ENCODE measurements at regions of chr7 and their contacts with region 1.

Region 1: DNA sequence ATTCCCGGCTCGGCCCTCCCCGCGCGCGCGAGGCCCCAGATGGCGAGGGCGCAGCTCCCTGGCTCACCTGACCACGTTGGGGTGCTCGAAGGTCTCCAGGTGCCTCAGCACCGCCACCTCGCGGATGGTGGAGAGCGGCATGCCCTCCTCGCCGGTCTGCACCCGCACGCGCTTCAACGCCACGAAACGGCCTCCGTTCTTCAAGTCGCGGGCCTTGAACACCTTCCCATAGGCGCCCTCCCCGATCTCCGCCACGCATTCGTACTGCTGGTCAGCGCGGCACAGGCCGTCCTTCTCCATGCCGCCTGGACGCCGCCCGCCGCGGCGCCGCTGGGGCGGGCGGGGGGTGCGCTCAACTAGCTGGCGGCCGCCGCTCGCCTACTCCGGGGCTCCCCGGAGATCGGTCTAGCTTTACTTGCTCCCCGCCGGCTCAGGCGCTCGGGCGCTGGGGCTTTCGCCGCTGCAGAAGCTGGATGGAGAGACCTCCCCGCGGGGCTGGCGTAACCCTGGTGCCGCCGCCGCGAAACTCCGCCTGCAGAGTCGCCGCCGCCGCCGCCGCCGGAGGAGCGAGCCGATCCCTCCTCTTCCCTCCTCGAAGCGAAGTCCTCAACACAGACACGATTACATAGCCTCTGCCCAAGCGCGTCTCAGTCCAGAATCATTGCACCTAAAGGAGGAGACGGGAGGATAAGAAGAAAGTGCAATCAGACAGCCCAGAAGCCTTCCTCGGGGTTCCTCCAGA is 3.2 kb downstream of the CDK6 start:
- DNase-seq: peak; percentile 73 to 88 (median 84)
- ATAC-seq: peak; percentile 86
- H3K4me3 ChIP-seq: peak overlapping the region; percentile 77
- H3K4me3 Mint-ChIP-seq: peak overlapping the region; percentile 91 to 99 (median 96)
- H3K27ac ChIP-seq: peak overlapping the region; percentile 73
- H3K27ac Mint-ChIP-seq: peak overlapping the region; percentile 78 to 99 (median 90)
- H3K4me1 ChIP-seq: peaks cover 27 to 29% of the 10 kb centered on the region in 2 donors
- H3K4me1 Mint-ChIP-seq: peaks cover 12 to 60% (median 51%) of the 10 kb centered on the region in 7 donors
- H3K27me3 ChIP-seq: no peaks in the 10 kb centered on the region
- H3K27me3 Mint-ChIP-seq: peaks cover 0 to 13% (median 0%) of the 10 kb centered on the region in 5 donors

Region 2: GRCh38 chr7:92134271-92135051 is 698.7 kb before region 1 on chr7 and contains the start of gene CYP51A1:
- CTCF ChIA-PET with region 1: no interaction called
- POLR2A ChIA-PET with region 1: no interaction called
- intact Hi-C with region 1: loop called (anchors 2 to 10 kb)
- DNase-seq: peak; percentile 93 to 98 (median 96)
- ATAC-seq: peak; percentile 93
- H3K4me3 ChIP-seq: peak within 1 kb of the TSS; percentile 92
- H3K4me3 Mint-ChIP-seq: peak within 1 kb of the TSS; percentile 95 to 100 (median 98)
- H3K27ac ChIP-seq: peak within 1 kb of the TSS; percentile 94
- H3K27ac Mint-ChIP-seq: peak within 1 kb of the TSS; percentile 89 to 100 (median 99)
- H3K4me1 ChIP-seq: peaks cover 4 to 12% of the 10 kb centered on the region in 2 donors
- H3K4me1 Mint-ChIP-seq: peaks cover 12 to 49% (median 40%) of the 10 kb centered on the region in 7 donors
- H3K27me3 ChIP-seq: no peaks in the 10 kb centered on the region
- H3K27me3 Mint-ChIP-seq: peaks cover 0 to 2% (median 0%) of the 10 kb centered on the region in 5 donors
- total RNA-seq, gene CYP51A1: 14.7 to 36.6 (median 21.7) TPM

Region 3: GRCh38 chr7:92590711-92591310 is 242.4 kb before region 1 on chr7:
- CTCF ChIA-PET with region 1: interaction called, 3 read pairs
- POLR2A ChIA-PET with region 1: interaction called, 4 read pairs
- intact Hi-C with region 1: loop called (anchors 1 kb)
- DNase-seq: peak in 1 of 9 donors; percentile 11
- ATAC-seq: no peak
- H3K4me3 ChIP-seq: peak overlapping the region; percentile 77
- H3K4me3 Mint-ChIP-seq: peak overlapping the region; percentile 90 to 96 (median 94)
- H3K27ac ChIP-seq: peak overlapping the region; percentile 94
- H3K27ac Mint-ChIP-seq: peak overlapping the region in 8 of 9 donors; percentile 22 to 96 (median 76)
- H3K4me1 ChIP-seq: peaks cover 14 to 21% of the 10 kb centered on the region in 2 donors
- H3K4me1 Mint-ChIP-seq: peaks cover 27 to 46% (median 39%) of the 10 kb centered on the region in 7 donors
- H3K27me3 ChIP-seq: no peaks in the 10 kb centered on the region
- H3K27me3 Mint-ChIP-seq: peaks cover 0 to 4% (median 0%) of the 10 kb centered on the region in 5 donors

Region 4: GRCh38 chr7:92717993-92718716 is 115.0 kb before region 1 on chr7:
- CTCF ChIA-PET with region 1: interaction called, 3 read pairs
- POLR2A ChIA-PET with region 1: interaction called, 5 read pairs
- intact Hi-C with region 1: loop called (anchors 1 kb)
- DNase-seq: peak in 8 of 9 donors; percentile 45 to 73 (median 62)
- ATAC-seq: peak; percentile 91
- H3K4me3 ChIP-seq: peak overlapping the region; percentile 62
- H3K4me3 Mint-ChIP-seq: peak overlapping the region; percentile 84 to 96 (median 94)
- H3K27ac ChIP-seq: peak overlapping the region; percentile 49
- H3K27ac Mint-ChIP-seq: peak overlapping the region; percentile 88 to 99 (median 96)
- H3K4me1 ChIP-seq: peaks cover 10 to 14% of the 10 kb centered on the region in 2 donors
- H3K4me1 Mint-ChIP-seq: peaks cover 26 to 73% (median 40%) of the 10 kb centered on the region in 7 donors
- H3K27me3 ChIP-seq: no peaks in the 10 kb centered on the region
- H3K27me3 Mint-ChIP-seq: no peaks in the 10 kb centered on the region

Region 5: DNA sequence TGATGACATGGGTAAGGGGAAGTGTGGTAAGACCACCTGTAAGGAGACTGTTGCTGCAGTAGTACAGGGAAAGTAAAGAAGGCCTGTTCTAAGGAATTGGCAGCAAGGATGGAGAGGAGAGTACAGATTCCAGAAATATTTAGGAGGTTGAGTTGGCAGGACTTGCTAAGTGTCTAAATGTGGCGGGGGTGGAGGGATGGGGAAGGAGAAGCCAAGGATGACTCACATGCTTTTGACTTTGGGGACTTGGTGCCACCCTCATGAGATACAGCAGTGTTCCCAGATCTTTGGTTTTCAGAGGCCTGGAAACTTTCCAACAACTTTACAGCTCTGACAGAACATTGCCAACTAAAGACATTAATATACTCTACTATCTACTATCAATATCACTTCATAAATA is 42.2 kb before region 1 on chr7:
- CTCF ChIA-PET with region 1: no interaction called
- POLR2A ChIA-PET with region 1: no interaction called
- intact Hi-C with region 1: no loop called
- DNase-seq: no peak
- ATAC-seq: no peak
- H3K4me3 ChIP-seq: no peak overlapping the region
- H3K4me3 Mint-ChIP-seq: no peak overlapping the region
- H3K27ac ChIP-seq: no peak overlapping the region
- H3K27ac Mint-ChIP-seq: peak overlapping the region in 2 of 9 donors; percentile 22 to 68
- H3K4me1 ChIP-seq: peaks cover 0 to 3% of the 10 kb centered on the region in 2 donors
- H3K4me1 Mint-ChIP-seq: peaks cover 0 to 56% (median 34%) of the 10 kb centered on the region in 7 donors
- H3K27me3 ChIP-seq: no peaks in the 10 kb centered on the region
- H3K27me3 Mint-ChIP-seq: no peaks in the 10 kb centered on the region

Region 6: GRCh38 chr7:92854501-92855238 is 21.5 kb after region 1 on chr7:
- CTCF ChIA-PET with region 1: no interaction called
- POLR2A ChIA-PET with region 1: no interaction called
- intact Hi-C with region 1: loop called in 1 of 2 experiments (anchors 2 kb)
- DNase-seq: no peak
- ATAC-seq: no peak
- H3K4me3 ChIP-seq: no peak overlapping the region
- H3K4me3 Mint-ChIP-seq: peak overlapping the region in 1 of 10 donors; percentile 18
- H3K27ac ChIP-seq: no peak overlapping the region
- H3K27ac Mint-ChIP-seq: peak overlapping the region in 1 of 9 donors; percentile 55
- H3K4me1 ChIP-seq: no peaks in the 10 kb centered on the region
- H3K4me1 Mint-ChIP-seq: peaks cover 0 to 10% (median 0%) of the 10 kb centered on the region in 7 donors
- H3K27me3 ChIP-seq: peaks cover 0 to 4% of the 10 kb centered on the region in 2 donors
- H3K27me3 Mint-ChIP-seq: peaks cover 0 to 17% (median 4%) of the 10 kb centered on the region in 5 donors

Region 7: DNA sequence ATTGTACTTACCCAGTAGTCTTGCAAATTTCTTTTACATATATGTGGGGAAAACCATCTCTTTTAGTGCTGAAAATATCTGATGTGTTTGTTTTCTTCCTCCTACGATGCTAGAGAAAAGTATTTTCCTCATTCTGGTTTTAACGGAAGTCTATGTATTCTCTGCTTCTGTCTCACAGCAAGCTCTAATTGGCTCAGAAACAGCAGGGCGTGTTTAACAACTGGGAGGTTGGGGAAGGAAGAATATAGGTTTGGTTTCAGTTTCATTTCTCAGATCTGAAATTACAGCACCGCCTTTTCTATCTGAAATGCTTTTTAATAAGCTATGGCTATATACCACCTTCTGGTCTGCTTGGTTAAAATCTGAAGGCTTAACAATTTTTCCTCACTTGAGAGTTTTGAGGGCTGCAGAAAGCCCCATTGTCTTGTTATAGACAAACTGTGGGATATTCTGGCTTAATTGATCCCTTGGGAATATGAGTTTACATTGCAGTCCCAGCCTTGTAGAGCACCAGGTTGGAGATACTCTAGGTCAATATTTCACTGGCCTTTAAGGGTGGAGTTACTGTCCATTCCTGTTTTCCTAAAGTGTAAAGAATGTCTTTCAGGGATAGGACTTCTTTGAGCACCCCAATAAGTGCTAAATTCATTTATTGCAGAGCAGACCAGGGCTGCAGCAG is 284.8 kb after region 1 on chr7 and contains the start of gene SAMD9:
- CTCF ChIA-PET with region 1: interaction called, 3 read pairs
- POLR2A ChIA-PET with region 1: interaction called, 3 read pairs
- intact Hi-C with region 1: loop called (anchors 1 to 2 kb)
- DNase-seq: peak in 8 of 9 donors; percentile 28 to 85 (median 78)
- ATAC-seq: peak; percentile 99
- H3K4me3 ChIP-seq: peak within 1 kb of the TSS; percentile 52
- H3K4me3 Mint-ChIP-seq: peak within 1 kb of the TSS; percentile 78 to 97 (median 92)
- H3K27ac ChIP-seq: peak within 1 kb of the TSS; percentile 82
- H3K27ac Mint-ChIP-seq: peak within 1 kb of the TSS; percentile 85 to 98 (median 93)
- H3K4me1 ChIP-seq: peaks cover 12 to 20% of the 10 kb centered on the region in 2 donors
- H3K4me1 Mint-ChIP-seq: peaks cover 38 to 56% (median 48%) of the 10 kb centered on the region in 7 donors
- H3K27me3 ChIP-seq: no peaks in the 10 kb centered on the region
- H3K27me3 Mint-ChIP-seq: no peaks in the 10 kb centered on the region
- total RNA-seq, gene SAMD9: 20.9 to 61.6 (median 47.8) TPM

Region 8: GRCh38 chr7:94509879-94510581 is 1676.8 kb after region 1 on chr7:
- CTCF ChIA-PET with region 1: no interaction called
- POLR2A ChIA-PET with region 1: no interaction called
- intact Hi-C with region 1: loop called in 1 of 2 experiments (anchors 10 kb)
- DNase-seq: peak; percentile 51 to 75 (median 69)
- ATAC-seq: peak; percentile 90
- H3K4me3 ChIP-seq: peak overlapping the region; percentile 74
- H3K4me3 Mint-ChIP-seq: peak overlapping the region in 7 of 10 donors; percentile 75 to 93 (median 88)
- H3K27ac ChIP-seq: peak overlapping the region; percentile 90
- H3K27ac Mint-ChIP-seq: peak overlapping the region in 7 of 9 donors; percentile 70 to 94 (median 92)
- H3K4me1 ChIP-seq: peaks cover 17 to 22% of the 10 kb centered on the region in 2 donors
- H3K4me1 Mint-ChIP-seq: peaks cover 27 to 52% (median 42%) of the 10 kb centered on the region in 7 donors
- H3K27me3 ChIP-seq: no peaks in the 10 kb centered on the region
- H3K27me3 Mint-ChIP-seq: no peaks in the 10 kb centered on the region